ENCODE measurements at regions of chr17 and their contacts with region 1.

Region 1: DNA sequence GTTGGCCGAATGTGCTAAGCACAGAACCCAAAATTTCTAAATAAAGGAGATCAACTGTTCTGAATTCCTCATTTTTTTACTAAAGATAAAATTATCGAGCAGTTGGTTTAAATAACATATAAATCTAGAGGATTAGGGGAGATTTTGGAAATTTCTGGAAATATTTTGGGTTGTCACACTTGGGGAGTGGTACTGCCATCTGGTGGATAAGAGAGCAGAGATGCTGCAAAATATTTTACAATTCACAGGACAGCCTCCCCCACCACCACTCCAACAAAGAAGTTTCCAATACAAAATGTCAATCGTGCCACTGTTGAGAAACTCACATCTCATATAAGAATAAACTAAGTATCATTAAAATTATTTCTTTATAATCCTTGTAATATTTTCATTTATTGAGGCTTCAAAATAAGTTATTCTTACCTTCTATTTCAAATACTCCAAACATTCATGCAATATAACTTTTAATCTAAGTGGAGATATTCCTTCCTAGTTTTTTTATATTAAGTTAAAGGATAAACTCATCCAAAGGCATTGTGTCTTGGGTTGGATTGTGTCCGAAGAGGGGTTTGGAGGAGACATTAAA is 17.0 kb upstream of the ABCA8 start:
- DNase-seq: no peak
- ATAC-seq: peak; percentile 47 to 53

Region 2: GRCh38 chr17:68771867-68772515 is 200.2 kb before region 1 on chr17:
- intact Hi-C with region 1: loop called (anchors 2 to 5 kb)
- DNase-seq: no peak
- ATAC-seq: peak; percentile 81 to 90

Region 3: DNA sequence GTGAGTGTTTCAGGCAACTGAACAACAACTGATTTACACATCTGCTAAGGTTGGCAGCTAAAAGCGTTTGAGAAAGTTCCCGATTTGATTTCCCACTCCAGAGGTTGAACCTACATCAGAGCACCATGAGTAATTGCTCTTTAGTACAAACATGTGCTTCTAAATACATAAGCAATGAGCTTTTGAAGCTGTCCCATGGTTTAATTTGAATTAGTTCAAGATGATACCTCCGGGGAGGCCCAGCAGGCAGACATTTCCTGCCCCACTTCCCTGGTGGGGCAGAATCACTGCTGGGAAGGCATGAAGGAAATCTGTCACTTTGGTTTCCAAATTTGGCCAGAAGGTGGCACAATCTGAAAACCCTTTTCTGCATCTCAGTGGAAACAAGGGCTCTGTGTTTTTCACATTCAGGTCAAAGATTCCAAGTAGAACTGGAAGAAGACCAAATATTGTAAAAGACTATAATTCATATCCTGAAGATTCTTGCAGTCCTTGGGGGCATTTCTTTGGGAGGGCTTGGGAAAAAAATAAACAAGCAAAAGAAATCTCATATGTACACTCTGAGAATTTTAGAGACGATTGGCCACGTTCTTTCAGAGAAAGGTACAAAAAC is 194.9 kb before region 1 on chr17:
- intact Hi-C with region 1: loop called (anchors 2 to 5 kb)
- DNase-seq: peak; percentile 42
- ATAC-seq: peak; percentile 79 to 88

Measured in left cardiac atrium (tissue), 4 donors.